ENCODE measurements at regions of chr12 and their contacts with region 1.

Region 1: DNA sequence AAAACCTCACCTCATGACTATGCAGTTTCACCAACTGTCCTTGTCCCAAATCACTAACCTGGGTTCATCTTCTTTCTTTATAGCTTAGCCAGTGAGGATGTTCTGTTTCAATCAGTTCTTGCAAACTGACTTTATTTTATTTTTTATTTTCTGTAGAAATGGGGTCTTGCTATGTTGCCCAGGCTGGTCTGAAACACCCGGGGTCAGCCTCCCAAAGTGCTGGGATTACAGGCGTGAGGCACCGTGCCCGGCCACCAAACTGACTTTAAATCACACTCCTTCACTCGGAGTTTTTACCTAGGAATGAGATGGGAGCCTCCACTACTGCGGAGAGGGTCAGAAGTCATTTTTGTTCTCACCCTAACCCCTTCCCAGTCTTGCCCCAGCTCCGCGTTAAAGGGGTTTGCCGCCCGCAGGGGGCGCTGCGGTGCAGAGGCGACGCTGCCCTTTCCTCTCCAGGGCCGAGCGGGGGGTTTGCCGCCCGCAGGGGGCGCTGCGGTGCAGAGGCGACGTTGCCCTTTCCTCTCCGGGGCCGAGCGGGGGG is 7.0 kb upstream of the B4GALNT3 start:
- DNase-seq: peak; percentile 67
- H3K4me3 Mint-ChIP-seq: no peak overlapping the region
- H3K27ac Mint-ChIP-seq: no peak overlapping the region
- H3K4me1 Mint-ChIP-seq: peaks cover 3% of the 10 kb centered on the region
- H3K27me3 Mint-ChIP-seq: peaks cover 48% of the 10 kb centered on the region

Region 2: GRCh38 chr12:538731-539539 is 86.2 kb after region 1 on chr12:
- CTCF ChIA-PET with region 1: interaction called, 123 read pairs
- DNase-seq: peak; percentile 72
- H3K4me3 Mint-ChIP-seq: no peak overlapping the region
- H3K27ac Mint-ChIP-seq: peak overlapping the region; percentile 85
- H3K4me1 Mint-ChIP-seq: peaks cover 29% of the 10 kb centered on the region
- H3K27me3 Mint-ChIP-seq: peaks cover 39% of the 10 kb centered on the region

Region 3: GRCh38 chr12:546921-547845 is 94.4 kb after region 1 on chr12:
- CTCF ChIA-PET with region 1: interaction called, 123 read pairs
- DNase-seq: peak; percentile 74
- H3K4me3 Mint-ChIP-seq: no peak overlapping the region
- H3K27ac Mint-ChIP-seq: peak overlapping the region; percentile 24
- H3K4me1 Mint-ChIP-seq: peaks cover 36% of the 10 kb centered on the region
- H3K27me3 Mint-ChIP-seq: peaks cover 93% of the 10 kb centered on the region

Region 4: DNA sequence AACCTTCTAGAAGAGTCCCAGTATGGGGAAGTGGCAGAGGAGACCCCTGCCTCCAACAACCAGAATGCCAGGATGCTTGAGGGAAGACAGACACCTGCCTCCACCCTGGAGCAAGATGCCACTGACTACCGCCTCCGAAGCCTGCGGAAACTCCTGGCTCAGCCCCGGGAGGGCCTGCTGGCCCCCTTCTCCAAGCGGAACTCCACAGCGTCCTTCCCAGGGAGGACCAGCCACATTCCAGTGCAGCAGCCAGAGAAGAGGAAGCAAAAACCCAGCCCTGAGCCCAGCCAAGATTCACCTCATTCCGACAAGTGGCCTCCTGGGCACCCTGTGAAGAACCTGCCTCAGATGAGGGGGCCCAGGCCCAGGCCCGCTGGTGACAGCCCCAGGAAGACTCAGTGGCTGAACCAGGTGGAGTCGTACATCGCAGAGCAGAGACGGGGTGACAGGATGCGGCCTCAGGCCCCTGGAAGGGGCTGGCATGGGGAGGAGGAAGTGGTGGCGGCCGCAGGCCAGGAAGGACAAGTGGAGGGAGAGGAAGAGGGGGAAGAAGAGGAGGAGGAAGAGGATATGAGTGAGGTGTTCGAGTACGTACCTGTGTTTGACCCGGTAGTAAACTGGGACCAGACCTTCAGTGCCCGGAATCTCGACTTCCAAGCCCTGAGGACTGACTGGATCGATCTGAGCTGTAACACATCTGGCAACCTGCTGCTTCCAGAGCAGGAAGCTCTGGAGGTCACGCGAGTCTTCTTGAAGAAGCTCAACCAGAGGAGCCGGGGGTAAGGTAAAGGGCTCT is 100.7 kb after region 1 on chr12:
- CTCF ChIA-PET with region 1: interaction called, 102 read pairs
- DNase-seq: peak; percentile 49
- H3K4me3 Mint-ChIP-seq: peak overlapping the region; percentile 40
- H3K27ac Mint-ChIP-seq: peak overlapping the region; percentile 79
- H3K4me1 Mint-ChIP-seq: peaks cover 50% of the 10 kb centered on the region
- H3K27me3 Mint-ChIP-seq: peaks cover 63% of the 10 kb centered on the region